Thyroid gland (tissue), 4 donors: ENCODE measurements at regions of chr2 and their contacts with region 1.

Region 1: GRCh38 chr2:226799181-226799975 is at the start of gene IRS1:
- DNase-seq: peak; percentile 84 to 87
- H3K4me3 ChIP-seq: peak within 1 kb of the TSS; percentile 72 to 76 (median 76)
- H3K27ac ChIP-seq: peak within 1 kb of the TSS; percentile 84 to 98 (median 94)
- H3K4me1 ChIP-seq: peaks cover 16 to 22% of the 10 kb centered on the region in 2 donors
- H3K27me3 ChIP-seq: no peaks in the 10 kb centered on the region
- CTCF ChIP-seq: peak in 2 of 6 experiments; percentile 60 to 87
- POLR2A ChIP-seq: peak in 1 of 2 donors; percentile 72
- total RNA-seq, gene IRS1: 61.9 to 166 (median 98.7) TPM

Region 2: DNA sequence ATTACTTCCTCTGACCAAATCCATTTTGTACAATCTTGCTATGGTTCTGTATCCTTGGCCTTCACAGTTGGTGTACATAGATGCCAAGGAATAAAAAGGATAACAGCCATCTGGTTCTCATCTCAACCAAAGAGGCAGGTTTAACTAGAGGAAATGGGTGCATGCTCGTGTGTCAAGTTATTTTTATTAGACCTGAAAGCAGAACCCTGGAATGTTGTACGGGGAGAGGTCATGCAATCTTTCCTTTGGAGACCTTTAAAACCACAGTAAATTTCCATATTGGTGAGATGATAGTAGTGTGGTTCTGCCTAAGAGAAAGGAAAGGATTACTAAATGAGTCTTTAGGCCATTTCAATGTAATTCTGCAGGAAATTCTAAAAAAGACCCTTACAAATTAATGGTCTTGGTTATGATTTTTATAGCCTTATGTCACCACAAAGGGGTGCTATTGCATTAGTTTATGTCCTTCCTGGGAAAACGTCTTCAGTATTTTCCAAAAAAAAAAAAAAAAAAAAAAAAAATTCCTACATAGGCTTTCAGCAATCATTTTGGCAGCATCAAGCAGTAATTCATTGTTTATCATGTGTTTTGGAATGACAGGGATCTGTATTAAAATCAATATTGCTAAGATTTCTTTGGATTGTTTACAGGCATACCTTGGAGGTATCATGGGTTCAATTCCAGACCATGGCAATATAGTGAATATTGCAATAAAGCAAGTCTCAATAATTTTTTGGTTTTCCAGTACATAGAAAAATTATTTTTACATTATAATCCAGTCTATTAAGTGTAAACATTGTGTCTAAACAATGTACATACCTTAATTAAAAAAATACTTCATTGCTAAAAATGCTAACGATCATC is 1129.0 kb before region 1 on chr2:
- intact Hi-C with region 1: loop called (anchors 5 kb)
- DNase-seq: no peak
- H3K4me3 ChIP-seq: no peak overlapping the region
- H3K27ac ChIP-seq: no peak overlapping the region
- H3K4me1 ChIP-seq: no peaks in the 10 kb centered on the region
- H3K27me3 ChIP-seq: no peaks in the 10 kb centered on the region
- CTCF ChIP-seq: peak in 4 of 6 experiments; percentile 20 to 78 (median 48)
- POLR2A ChIP-seq: no peak

Region 3: DNA sequence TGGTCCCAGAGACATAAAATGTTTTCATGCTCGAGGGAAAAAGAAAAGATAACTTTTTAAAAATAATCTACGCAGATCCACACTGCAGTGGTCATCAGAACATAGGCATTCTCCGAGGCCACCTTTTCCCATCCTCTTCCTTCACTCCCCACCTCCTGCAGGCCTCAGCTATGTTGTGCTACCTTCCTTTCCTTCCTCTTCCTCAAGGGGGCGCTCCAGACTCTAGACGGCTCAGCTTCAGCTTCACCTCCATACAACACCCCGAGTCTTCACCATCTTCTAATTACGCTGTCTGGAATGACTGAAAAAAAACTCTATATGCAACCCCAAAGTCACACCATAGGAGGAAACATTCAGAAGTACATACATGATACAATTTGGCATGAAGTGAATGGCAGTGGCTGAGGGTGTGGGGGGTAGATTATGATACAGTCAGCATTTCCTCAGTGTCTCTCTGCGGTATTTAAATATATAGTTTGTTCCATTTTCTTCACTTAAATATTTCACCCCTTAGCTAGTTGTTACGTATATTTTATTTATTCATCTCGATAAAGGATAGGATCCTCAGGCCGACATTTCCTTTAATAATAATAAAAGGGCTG is 583.4 kb before region 1 on chr2:
- intact Hi-C with region 1: loop called (anchors 5 kb)
- DNase-seq: peak; percentile 53 to 75
- H3K4me3 ChIP-seq: no peak overlapping the region
- H3K27ac ChIP-seq: no peak overlapping the region
- H3K4me1 ChIP-seq: peaks cover 11 to 16% of the 10 kb centered on the region in 2 donors
- H3K27me3 ChIP-seq: no peaks in the 10 kb centered on the region
- CTCF ChIP-seq: peak; percentile 31 to 79 (median 58)
- POLR2A ChIP-seq: no peak

Region 4: GRCh38 chr2:226873051-226873620 is 73.8 kb after region 1 on chr2:
- intact Hi-C with region 1: no loop called
- DNase-seq: no peak
- H3K4me3 ChIP-seq: no peak overlapping the region
- H3K27ac ChIP-seq: no peak overlapping the region
- H3K4me1 ChIP-seq: peaks cover 0 to 7% of the 10 kb centered on the region in 2 donors
- H3K27me3 ChIP-seq: no peaks in the 10 kb centered on the region
- CTCF ChIP-seq: no peak
- POLR2A ChIP-seq: no peak

Region 5: GRCh38 chr2:226984750-226985582 is 185.6 kb after region 1 on chr2:
- intact Hi-C with region 1: loop called (anchors 5 kb)
- DNase-seq: peak; percentile 38 to 51
- H3K4me3 ChIP-seq: no peak overlapping the region
- H3K27ac ChIP-seq: no peak overlapping the region
- H3K4me1 ChIP-seq: peaks cover 4 to 5% of the 10 kb centered on the region in 2 donors
- H3K27me3 ChIP-seq: no peaks in the 10 kb centered on the region
- CTCF ChIP-seq: peak in 4 of 6 experiments; percentile 65 to 78 (median 74)
- POLR2A ChIP-seq: no peak